ENCODE measurements at regions of chr2 and their contacts with region 1.

Region 1: DNA sequence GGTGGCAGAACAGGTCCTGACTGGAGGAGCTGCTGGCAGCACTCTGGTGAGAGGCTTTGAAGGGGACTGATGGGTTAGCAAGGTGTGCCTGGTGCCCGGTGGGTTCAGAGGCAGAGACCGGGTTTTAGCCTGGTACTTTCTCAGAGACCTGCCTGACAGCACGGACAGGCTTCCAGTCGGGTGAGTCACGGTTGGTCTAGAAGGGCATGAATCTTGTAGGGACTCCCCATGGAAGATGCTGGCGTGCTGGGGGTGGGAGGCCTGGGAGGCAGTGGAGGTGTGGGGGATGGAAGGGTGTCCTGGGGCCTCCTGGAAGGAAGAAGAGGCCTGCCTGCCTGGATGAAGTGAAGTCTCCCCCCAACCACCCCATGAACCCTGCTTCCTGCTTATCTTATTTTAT is 52.6 kb downstream of the ACKR3 start:
- DNase-seq: no peak
- ATAC-seq: no peak

Region 2: GRCh38 chr2:235812185-235812665 is 810.0 kb before region 1 on chr2:
- intact Hi-C with region 1: no loop called
- DNase-seq: no peak
- ATAC-seq: no peak

Region 3: DNA sequence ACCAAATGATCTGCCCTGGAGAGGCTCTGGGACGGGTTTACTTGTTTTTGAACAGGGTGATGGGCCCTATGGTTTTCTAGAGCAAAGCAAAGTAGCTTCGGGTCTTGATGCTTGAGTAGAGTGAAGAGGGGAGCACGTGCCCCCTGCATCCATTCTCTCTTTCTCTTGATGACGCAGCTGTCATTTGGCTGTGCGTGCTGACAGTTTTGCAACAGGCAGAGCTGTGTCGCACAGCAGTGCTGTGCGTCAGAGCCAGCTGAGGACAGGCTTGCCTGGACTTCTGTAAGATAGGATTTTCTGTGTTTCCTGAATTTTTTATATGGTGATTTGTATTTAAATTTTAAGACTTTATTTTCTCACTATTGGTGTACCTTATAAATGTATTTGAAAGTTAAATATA is 40.7 kb before region 1 on chr2:
- intact Hi-C with region 1: loop called (anchors 1 kb)
- DNase-seq: no peak
- ATAC-seq: no peak

Measured in sciatic nerve (tissue), 2 donors.